ENCODE measurements at regions of chr5 and their contacts with region 1.

Region 1: GRCh38 chr5:115377468-115378217 is 81.2 kb upstream of the CCDC112 start:
- DNase-seq: no peak
- ATAC-seq: peak; percentile 50 to 73 (median 61)
- H3K4me3 ChIP-seq: no peak overlapping the region
- H3K27ac ChIP-seq: peak overlapping the region in 8 of 12 donors; percentile 11 to 81 (median 44)
- H3K4me1 ChIP-seq: peaks cover 0 to 24% (median 7%) of the 10 kb centered on the region in 12 donors
- H3K27me3 ChIP-seq: no peaks in the 10 kb centered on the region
- CTCF ChIP-seq: peak in 11 of 12 donors; percentile 24 to 64 (median 53)
- POLR2A ChIP-seq: no peak

Region 2: GRCh38 chr5:114719268-114719667 is 658.4 kb before region 1 on chr5:
- intact Hi-C with region 1: no loop called
- DNase-seq: no peak
- ATAC-seq: no peak
- H3K4me3 ChIP-seq: no peak overlapping the region
- H3K27ac ChIP-seq: no peak overlapping the region
- H3K4me1 ChIP-seq: no peaks in the 10 kb centered on the region
- H3K27me3 ChIP-seq: peaks cover 0 to 3% (median 0%) of the 10 kb centered on the region in 9 donors
- CTCF ChIP-seq: no peak
- POLR2A ChIP-seq: no peak

Region 3: DNA sequence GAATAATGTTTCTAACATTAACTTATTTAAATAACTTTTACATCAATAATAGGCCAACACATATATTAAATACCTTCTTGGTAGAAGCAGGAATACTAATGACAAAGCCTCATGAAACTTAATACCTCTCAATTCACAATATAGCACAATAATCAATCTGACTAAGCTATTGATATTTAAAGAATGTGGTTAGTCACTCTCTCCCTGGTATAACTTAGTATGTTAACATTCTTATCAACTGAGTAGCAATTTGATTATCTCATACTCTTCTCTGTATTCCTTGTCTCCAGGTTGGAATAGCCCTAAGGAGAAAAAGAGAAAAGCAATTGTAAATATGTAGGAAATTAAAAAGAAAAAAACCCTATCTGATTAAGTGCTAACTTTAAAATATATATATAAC is 110.0 kb before region 1 on chr5:
- intact Hi-C with region 1: no loop called
- DNase-seq: no peak
- ATAC-seq: no peak
- H3K4me3 ChIP-seq: no peak overlapping the region
- H3K27ac ChIP-seq: no peak overlapping the region
- H3K4me1 ChIP-seq: peaks cover 0 to 17% (median 0%) of the 10 kb centered on the region in 12 donors
- H3K27me3 ChIP-seq: no peaks in the 10 kb centered on the region
- CTCF ChIP-seq: no peak
- POLR2A ChIP-seq: no peak

Region 4: DNA sequence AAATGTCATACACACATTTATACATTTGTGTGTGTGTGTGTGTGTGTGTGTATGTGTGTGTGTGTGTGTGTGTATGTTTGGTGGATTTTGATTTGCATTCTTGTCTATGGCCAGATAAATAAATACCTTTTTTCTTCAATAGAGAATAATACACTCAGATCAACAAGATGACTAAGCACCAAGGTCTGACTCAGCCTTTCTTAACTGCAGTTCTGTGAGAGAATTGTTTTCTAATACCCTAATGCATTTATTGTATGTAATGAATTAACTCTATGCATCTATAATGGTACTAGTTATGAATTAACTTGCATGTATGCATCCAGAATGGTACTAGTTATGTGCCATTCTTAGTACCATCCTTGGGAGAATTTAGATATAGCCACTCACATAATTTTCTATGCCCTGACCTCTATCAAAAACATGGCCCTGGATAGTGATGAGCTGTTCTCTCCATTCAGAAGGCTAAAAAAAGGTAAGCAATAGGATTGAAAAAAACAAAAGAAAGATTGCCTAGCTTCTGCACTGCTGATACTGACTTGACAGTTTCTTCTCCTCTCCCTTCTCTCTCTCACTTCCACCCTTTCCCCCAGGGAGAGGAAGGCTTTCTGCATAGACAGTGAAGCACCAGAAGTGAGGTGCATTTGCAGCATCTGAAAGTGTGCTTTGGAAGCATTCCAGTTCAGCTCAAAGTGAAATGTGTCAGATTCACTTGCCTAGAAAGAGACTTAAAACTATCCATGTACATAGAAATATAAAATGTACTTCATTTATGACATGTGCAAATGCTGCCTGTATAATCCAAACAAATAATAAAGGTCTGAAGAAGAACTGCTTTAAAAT is 26.1 kb before region 1 on chr5:
- intact Hi-C with region 1: no loop called
- DNase-seq: no peak
- ATAC-seq: no peak
- H3K4me3 ChIP-seq: no peak overlapping the region
- H3K27ac ChIP-seq: no peak overlapping the region
- H3K4me1 ChIP-seq: peaks cover 0 to 16% (median 0%) of the 10 kb centered on the region in 12 donors
- H3K27me3 ChIP-seq: no peaks in the 10 kb centered on the region
- CTCF ChIP-seq: no peak
- POLR2A ChIP-seq: no peak

Region 5: DNA sequence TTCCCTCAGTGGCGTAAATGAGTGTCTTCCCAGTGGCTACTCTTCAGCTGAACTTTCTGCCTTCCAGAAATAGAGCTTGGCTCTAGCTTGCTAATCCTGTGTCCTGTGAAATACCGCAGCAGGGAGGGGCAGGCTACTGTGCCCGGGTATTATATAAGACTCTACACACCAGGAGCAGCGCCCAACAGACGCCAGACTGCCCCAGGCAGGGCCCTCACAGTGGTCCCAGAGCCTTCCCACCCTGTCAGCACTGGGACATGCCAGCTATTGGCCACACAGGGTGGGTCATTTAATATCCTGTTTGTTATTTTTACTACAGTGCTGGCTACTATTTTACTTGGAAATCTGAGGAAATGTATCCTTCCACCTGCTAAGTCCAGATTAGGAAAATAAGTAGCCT is 45.9 kb after region 1 on chr5:
- intact Hi-C with region 1: loop called in 3 of 10 experiments (anchors 2 to 5 kb)
- DNase-seq: peak; percentile 82 to 89 (median 85)
- ATAC-seq: peak; percentile 93 to 97 (median 95)
- H3K4me3 ChIP-seq: peak overlapping the region in 8 of 12 donors; percentile 5 to 34 (median 16)
- H3K27ac ChIP-seq: peak overlapping the region; percentile 67 to 97 (median 89)
- H3K4me1 ChIP-seq: peaks cover 4 to 63% (median 42%) of the 10 kb centered on the region in 12 donors
- H3K27me3 ChIP-seq: no peaks in the 10 kb centered on the region
- CTCF ChIP-seq: no peak
- POLR2A ChIP-seq: peak in 1 of 2 donors; percentile 57

Region 6: GRCh38 chr5:115450741-115451140 is 73.1 kb after region 1 on chr5:
- intact Hi-C with region 1: loop called in 1 of 10 experiments (anchors 10 kb)
- DNase-seq: no peak
- ATAC-seq: no peak
- H3K4me3 ChIP-seq: no peak overlapping the region
- H3K27ac ChIP-seq: peak overlapping the region in 5 of 12 donors; percentile 7 to 69 (median 21)
- H3K4me1 ChIP-seq: peaks cover 0 to 33% (median 8%) of the 10 kb centered on the region in 12 donors
- H3K27me3 ChIP-seq: no peaks in the 10 kb centered on the region
- CTCF ChIP-seq: no peak
- POLR2A ChIP-seq: no peak

Region 7: GRCh38 chr5:115544436-115545350 is 167.1 kb after region 1 on chr5 and contains the start of gene FEM1C:
- intact Hi-C with region 1: loop called in 6 of 10 experiments (anchors 2 to 10 kb)
- DNase-seq: peak; percentile 98 to 99 (median 98)
- ATAC-seq: peak; percentile 98 to 99 (median 98)
- H3K4me3 ChIP-seq: peak within 1 kb of the TSS; percentile 61 to 98 (median 89)
- H3K27ac ChIP-seq: peak within 1 kb of the TSS; percentile 78 to 99 (median 97)
- H3K4me1 ChIP-seq: peaks cover 0 to 42% (median 21%) of the 10 kb centered on the region in 12 donors
- H3K27me3 ChIP-seq: no peaks in the 10 kb centered on the region
- CTCF ChIP-seq: no peak
- POLR2A ChIP-seq: peak; percentile 99 to 100
- total RNA-seq, gene FEM1C: 37.5 to 92.7 (median 48.9) TPM

Region 8: DNA sequence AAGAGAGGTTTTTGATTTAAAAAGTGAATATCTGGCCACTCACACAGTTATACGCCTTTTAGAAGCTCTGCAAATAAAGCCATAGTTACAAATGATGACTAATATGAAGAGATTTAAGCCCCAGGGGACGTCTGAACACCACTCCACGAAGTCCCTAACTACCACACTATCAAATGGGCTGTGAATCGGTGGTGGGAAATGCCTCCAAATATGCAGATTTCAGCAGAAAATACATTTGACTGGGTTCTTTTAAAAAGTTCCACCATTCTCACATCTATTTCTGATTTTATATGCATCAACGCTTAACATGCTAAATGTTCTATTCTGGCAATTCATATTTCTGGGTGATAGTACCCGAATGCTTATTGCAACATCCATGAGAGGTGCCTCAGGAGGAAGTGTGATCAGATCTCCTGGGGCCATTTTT is 202.1 kb after region 1 on chr5:
- intact Hi-C with region 1: loop called in 7 of 10 experiments (anchors 1 to 5 kb)
- DNase-seq: no peak
- ATAC-seq: no peak
- H3K4me3 ChIP-seq: no peak overlapping the region
- H3K27ac ChIP-seq: no peak overlapping the region
- H3K4me1 ChIP-seq: peaks cover 0 to 6% (median 0%) of the 10 kb centered on the region in 12 donors
- H3K27me3 ChIP-seq: no peaks in the 10 kb centered on the region
- CTCF ChIP-seq: no peak
- POLR2A ChIP-seq: no peak

Measured in heart left ventricle (tissue), 16 donors.